Heart right ventricle (tissue), 16 donors: ENCODE measurements at regions of chr20 and their contacts with region 1.

Region 1: GRCh38 chr20:63864847-63865640 is at the start of gene TPD52L2:
- DNase-seq: peak; percentile 98 to 99
- ATAC-seq: peak; percentile 90 to 97 (median 96)
- H3K4me3 ChIP-seq: peak within 1 kb of the TSS; percentile 74 to 97 (median 85)
- H3K27ac ChIP-seq: peak within 1 kb of the TSS; percentile 76 to 98 (median 94)
- H3K4me1 ChIP-seq: peaks cover 6 to 64% (median 33%) of the 10 kb centered on the region in 9 donors
- H3K27me3 ChIP-seq: no peaks in the 10 kb centered on the region
- CTCF ChIP-seq: no peak
- total RNA-seq, gene TPD52L2: 60.1 to 83.0 (median 72.8) TPM

Region 2: DNA sequence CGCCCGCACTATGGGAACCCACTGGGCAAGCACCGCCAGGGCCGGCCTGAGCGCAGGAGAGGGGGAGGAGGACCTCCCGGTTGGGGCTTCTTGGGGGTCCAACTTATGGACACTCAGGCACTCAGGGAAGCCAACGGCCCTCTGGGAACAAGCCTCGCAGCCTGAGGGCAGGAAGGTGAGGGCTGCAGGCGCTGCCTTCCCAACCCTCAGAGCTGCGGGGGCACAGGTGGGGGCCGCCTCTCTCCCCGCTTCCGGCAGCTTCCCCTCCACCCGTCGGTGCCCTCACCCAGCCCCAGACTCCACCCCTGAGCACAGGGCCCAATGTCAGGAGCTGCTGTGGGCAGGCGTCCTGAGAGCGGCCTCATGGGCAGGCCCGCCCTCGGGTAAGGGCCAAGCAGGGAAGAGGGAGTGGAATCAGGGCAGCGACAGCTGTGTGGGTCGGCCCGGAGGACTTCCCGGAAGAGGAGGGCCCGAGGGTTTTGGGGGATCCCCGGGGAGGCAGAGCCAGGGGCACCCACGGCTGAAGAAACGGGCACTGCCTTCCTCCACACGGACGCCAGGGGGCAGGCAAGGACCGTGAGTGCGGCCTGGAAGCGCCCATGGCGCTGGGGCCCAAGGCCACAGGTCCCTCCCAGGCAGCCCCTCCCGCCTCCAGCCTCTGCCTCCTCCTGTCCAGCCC is 327.4 kb before region 1 on chr20:
- intact Hi-C with region 1: loop called in 5 of 10 experiments (anchors 2 to 10 kb)
- DNase-seq: peak; percentile 80 to 87
- ATAC-seq: peak; percentile 86 to 93 (median 88)
- H3K4me3 ChIP-seq: peak overlapping the region in 9 of 10 donors; percentile 6 to 51 (median 31)
- H3K27ac ChIP-seq: peak overlapping the region in 7 of 10 donors; percentile 34 to 91 (median 57)
- H3K4me1 ChIP-seq: peaks cover 0 to 34% (median 16%) of the 10 kb centered on the region in 9 donors
- H3K27me3 ChIP-seq: peaks cover 0 to 38% (median 20%) of the 10 kb centered on the region in 7 donors
- CTCF ChIP-seq: peak; percentile 93 to 99 (median 97)

Region 3: GRCh38 chr20:63657937-63658748 is 206.9 kb before region 1 on chr20 and contains the start of gene RTEL1:
- intact Hi-C with region 1: loop called in 1 of 10 experiments (anchors 2 kb)
- DNase-seq: peak; percentile 92
- ATAC-seq: peak; percentile 94 to 98 (median 96)
- H3K4me3 ChIP-seq: peak within 1 kb of the TSS; percentile 38 to 89 (median 72)
- H3K27ac ChIP-seq: peak within 1 kb of the TSS; percentile 73 to 95 (median 90)
- H3K4me1 ChIP-seq: peaks cover 8 to 36% (median 29%) of the 10 kb centered on the region in 9 donors
- H3K27me3 ChIP-seq: peaks cover 0 to 3% (median 0%) of the 10 kb centered on the region in 7 donors
- CTCF ChIP-seq: peak in 1 of 9 donors; percentile 25
- total RNA-seq, gene RTEL1: 6.1 to 14.5 (median 10.3) TPM

Region 4: GRCh38 chr20:63782051-63782471 is 83.0 kb before region 1 on chr20:
- intact Hi-C with region 1: loop called (anchors 1 to 10 kb)
- DNase-seq: no peak
- ATAC-seq: no peak
- H3K4me3 ChIP-seq: no peak overlapping the region
- H3K27ac ChIP-seq: no peak overlapping the region
- H3K4me1 ChIP-seq: peaks cover 3 to 24% (median 15%) of the 10 kb centered on the region in 9 donors
- H3K27me3 ChIP-seq: no peaks in the 10 kb centered on the region
- CTCF ChIP-seq: no peak

Region 5: DNA sequence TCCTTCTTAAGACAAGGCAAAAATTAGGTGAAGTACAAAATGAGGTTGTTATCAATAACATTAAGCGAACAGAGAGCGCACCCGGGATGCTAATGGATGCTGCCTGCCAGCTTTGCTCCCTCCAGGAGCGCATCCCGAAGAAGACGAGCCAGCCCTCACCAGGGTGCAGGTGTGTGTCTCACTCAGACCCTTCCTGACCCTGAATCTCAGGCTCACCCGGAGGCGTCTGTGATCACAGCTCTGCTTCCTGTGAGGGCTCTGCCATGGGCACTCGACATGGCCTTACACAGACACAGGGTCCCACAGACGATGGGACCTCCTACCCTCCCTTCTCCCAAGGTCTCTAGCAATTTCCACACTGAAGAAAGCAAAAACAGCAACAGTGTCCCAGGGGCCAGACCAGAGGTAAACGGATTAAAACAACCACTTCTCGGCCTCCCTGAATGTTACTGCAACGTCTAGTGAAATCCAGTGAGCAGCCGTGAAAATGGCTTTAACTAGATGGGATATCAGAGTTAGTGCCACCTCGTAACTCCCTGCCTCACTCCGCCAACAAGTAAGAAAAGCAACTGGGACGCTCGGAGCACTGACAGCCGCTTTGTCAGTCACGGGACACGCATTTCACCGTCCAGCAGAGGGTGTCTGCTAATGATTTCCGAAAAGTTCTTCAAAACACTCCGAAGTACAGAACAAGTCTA is 45.7 kb before region 1 on chr20:
- intact Hi-C with region 1: loop called in 1 of 10 experiments (anchors 10 kb)
- DNase-seq: no peak
- ATAC-seq: peak in 5 of 8 donors; percentile 20 to 60 (median 45)
- H3K4me3 ChIP-seq: peak overlapping the region in 1 of 10 donors; percentile 13
- H3K27ac ChIP-seq: peak overlapping the region in 6 of 10 donors; percentile 6 to 53 (median 18)
- H3K4me1 ChIP-seq: peaks cover 5 to 69% (median 25%) of the 10 kb centered on the region in 9 donors
- H3K27me3 ChIP-seq: no peaks in the 10 kb centered on the region
- CTCF ChIP-seq: peak; percentile 5 to 58 (median 41)

Region 6: DNA sequence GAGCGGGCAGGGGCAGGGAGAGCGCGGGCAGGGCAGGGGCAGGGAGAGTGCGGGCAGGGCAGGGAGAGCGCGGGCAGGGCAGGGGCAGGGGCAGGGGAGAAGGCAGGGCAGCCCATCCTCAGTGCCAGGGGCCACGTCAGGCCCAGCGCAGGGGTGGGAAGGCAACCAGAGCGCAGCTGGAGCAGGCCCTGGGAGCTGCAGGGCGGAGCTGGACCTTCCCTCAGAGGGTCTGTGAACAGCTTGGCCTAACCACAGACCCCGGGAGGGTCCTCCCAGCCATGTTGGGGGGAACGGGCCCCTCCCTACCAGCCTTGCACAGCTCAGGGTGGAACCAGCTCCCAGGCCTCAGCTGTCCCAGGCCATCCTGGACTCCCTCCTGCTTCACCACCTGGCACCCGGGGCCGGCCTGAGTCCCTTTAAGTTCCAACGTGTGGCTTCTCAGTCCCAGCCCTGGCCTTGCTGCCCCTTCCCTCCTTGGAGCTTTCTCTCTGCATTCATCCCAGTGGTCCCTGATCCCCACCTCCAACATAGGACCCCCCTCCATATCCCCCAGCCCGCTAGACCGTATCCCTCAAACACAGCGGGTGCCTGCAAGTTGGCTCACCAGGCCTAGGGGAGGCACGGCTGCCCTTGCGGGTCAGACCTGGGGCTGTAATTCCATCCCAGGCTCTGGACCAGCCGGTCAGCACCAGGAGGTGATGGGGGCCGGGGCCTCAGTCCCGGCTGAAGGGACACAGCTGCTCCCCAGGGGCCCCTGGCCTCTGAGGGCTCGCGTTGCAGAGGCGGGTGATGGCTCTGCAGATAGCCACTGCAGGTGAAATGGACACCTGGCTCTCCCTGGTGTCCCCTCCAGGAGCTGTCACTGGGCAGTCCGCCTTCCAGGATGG is 28.3 kb before region 1 on chr20:
- intact Hi-C with region 1: no loop called
- DNase-seq: no peak
- ATAC-seq: no peak
- H3K4me3 ChIP-seq: no peak overlapping the region
- H3K27ac ChIP-seq: peak overlapping the region in 2 of 10 donors; percentile 14 to 15
- H3K4me1 ChIP-seq: peaks cover 26 to 40% (median 37%) of the 10 kb centered on the region in 9 donors
- H3K27me3 ChIP-seq: peaks cover 0 to 24% (median 0%) of the 10 kb centered on the region in 7 donors
- CTCF ChIP-seq: no peak

Region 7: GRCh38 chr20:63947638-63948456 is 82.8 kb after region 1 on chr20:
- intact Hi-C with region 1: no loop called
- DNase-seq: peak in 1 of 2 donors; percentile 26
- ATAC-seq: no peak
- H3K4me3 ChIP-seq: peak overlapping the region in 1 of 10 donors; percentile 25
- H3K27ac ChIP-seq: peak overlapping the region; percentile 36 to 98 (median 76)
- H3K4me1 ChIP-seq: peaks cover 42 to 98% (median 84%) of the 10 kb centered on the region in 9 donors
- H3K27me3 ChIP-seq: no peaks in the 10 kb centered on the region
- CTCF ChIP-seq: no peak